A673 (cell line): ENCODE measurements at regions of chr15 and their contacts with region 1.

Region 1: GRCh38 chr15:77633134-77633912 is 611 bp upstream of the LINGO1 start:
- DNase-seq: peak; percentile 87
- H3K4me3 ChIP-seq: peak overlapping the region; percentile 68
- H3K27ac ChIP-seq: peak overlapping the region; percentile 82
- H3K4me1 ChIP-seq: peaks cover 34% of the 10 kb centered on the region
- H3K27me3 ChIP-seq: no peaks in the 10 kb centered on the region
- CTCF ChIP-seq: peak; percentile 100

Region 2: GRCh38 chr15:77118882-77119321 is 514.4 kb before region 1 on chr15:
- CTCF ChIA-PET with region 1: interaction called, 4 read pairs
- POLR2A ChIA-PET with region 1: no interaction called
- intact Hi-C with region 1: loop called (anchors 5 kb)
- DNase-seq: peak; percentile 82
- H3K4me3 ChIP-seq: no peak overlapping the region
- H3K27ac ChIP-seq: no peak overlapping the region
- H3K4me1 ChIP-seq: no peaks in the 10 kb centered on the region
- H3K27me3 ChIP-seq: no peaks in the 10 kb centered on the region
- CTCF ChIP-seq: peak; percentile 93